AG04450 (cell line): ENCODE measurements at regions of chr6 and their contacts with region 1.

Region 1: GRCh38 chr6:33425668-33426577 is 6.1 kb downstream of the SYNGAP1 start:
- DNase-seq: peak; percentile 43
- H3K4me3 ChIP-seq: peak overlapping the region; percentile 65
- H3K27ac ChIP-seq: peak overlapping the region; percentile 83
- H3K27me3 ChIP-seq: no peaks in the 10 kb centered on the region
- CTCF ChIP-seq: peak; percentile 64

Region 2: GRCh38 chr6:33317669-33318425 is 108.1 kb before region 1 on chr6 and contains the start of gene ZBTB22:
- CTCF ChIA-PET with region 1: interaction called, 3 read pairs
- POLR2A ChIA-PET with region 1: interaction called, 17 read pairs
- DNase-seq: peak; percentile 98
- H3K4me3 ChIP-seq: peak within 1 kb of the TSS; percentile 78
- H3K27ac ChIP-seq: peak within 1 kb of the TSS; percentile 72
- H3K27me3 ChIP-seq: no peaks in the 10 kb centered on the region
- CTCF ChIP-seq: no peak
- polyA plus RNA-seq, gene ZBTB22: 8.4 and 11.8 TPM in 2 replicates

Region 3: GRCh38 chr6:33467091-33467490 is 41.2 kb after region 1 on chr6:
- CTCF ChIA-PET with region 1: no interaction called
- POLR2A ChIA-PET with region 1: no interaction called
- DNase-seq: no peak
- H3K4me3 ChIP-seq: no peak overlapping the region
- H3K27ac ChIP-seq: no peak overlapping the region
- H3K27me3 ChIP-seq: peaks cover 18% of the 10 kb centered on the region
- CTCF ChIP-seq: no peak